ENCODE measurements at regions of chr16 and their contacts with region 1.

Region 1: DNA sequence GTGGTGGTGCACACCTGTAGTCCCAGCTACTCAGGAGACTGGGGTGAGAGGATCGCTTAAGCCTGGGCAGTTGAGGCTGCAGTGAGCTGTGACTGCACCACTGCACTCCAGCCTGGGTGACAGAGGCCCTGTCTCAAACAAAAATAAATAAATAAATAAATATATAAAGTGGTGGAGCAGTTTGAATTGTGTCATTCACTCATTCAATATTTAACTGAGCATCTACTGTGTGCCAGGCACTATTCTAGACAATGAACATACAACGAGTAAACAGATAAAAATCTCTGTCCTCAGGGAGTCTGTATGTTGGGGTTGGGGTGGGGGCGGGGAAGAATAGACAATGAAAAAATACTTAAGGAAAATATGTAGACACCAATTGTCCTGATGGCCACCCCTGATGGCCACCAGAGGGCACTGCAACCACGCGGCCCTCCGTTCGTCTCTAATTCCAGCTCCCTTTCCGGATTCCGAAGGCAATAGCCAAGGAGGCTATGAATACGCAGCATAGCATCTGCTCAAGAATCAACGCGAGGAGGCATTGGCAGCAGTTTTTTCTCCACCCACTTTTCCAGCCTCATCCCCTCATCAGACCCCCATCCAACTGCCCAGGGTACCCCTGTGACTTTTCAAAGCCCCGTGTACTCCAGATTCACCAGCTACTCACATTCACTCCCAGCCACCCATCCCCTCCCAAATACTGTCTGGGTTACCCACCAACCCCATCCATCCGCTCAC is 21.4 kb downstream of the QPRT start:
- DNase-seq: peak; percentile 78
- H3K4me3 Mint-ChIP-seq: peak overlapping the region; percentile 49
- H3K27ac Mint-ChIP-seq: peak overlapping the region; percentile 91
- H3K4me1 Mint-ChIP-seq: peaks cover 40% of the 10 kb centered on the region
- H3K27me3 Mint-ChIP-seq: peaks cover 3% of the 10 kb centered on the region

Region 2: GRCh38 chr16:29720699-29721098 is 20.3 kb after region 1 on chr16:
- CTCF ChIA-PET with region 1: interaction called, 10 read pairs
- POLR2A ChIA-PET with region 1: interaction called, 3 read pairs
- DNase-seq: no peak
- H3K4me3 Mint-ChIP-seq: no peak overlapping the region
- H3K27ac Mint-ChIP-seq: peak overlapping the region; percentile 64
- H3K4me1 Mint-ChIP-seq: peaks cover 19% of the 10 kb centered on the region
- H3K27me3 Mint-ChIP-seq: no peaks in the 10 kb centered on the region

Region 3: GRCh38 chr16:29784901-29785500 is 84.6 kb after region 1 on chr16:
- CTCF ChIA-PET with region 1: interaction called, 28 read pairs
- POLR2A ChIA-PET with region 1: interaction called, 3 read pairs
- DNase-seq: peak; percentile 71
- H3K4me3 Mint-ChIP-seq: no peak overlapping the region
- H3K27ac Mint-ChIP-seq: peak overlapping the region; percentile 80
- H3K4me1 Mint-ChIP-seq: peaks cover 33% of the 10 kb centered on the region
- H3K27me3 Mint-ChIP-seq: peaks cover 5% of the 10 kb centered on the region

Region 4: DNA sequence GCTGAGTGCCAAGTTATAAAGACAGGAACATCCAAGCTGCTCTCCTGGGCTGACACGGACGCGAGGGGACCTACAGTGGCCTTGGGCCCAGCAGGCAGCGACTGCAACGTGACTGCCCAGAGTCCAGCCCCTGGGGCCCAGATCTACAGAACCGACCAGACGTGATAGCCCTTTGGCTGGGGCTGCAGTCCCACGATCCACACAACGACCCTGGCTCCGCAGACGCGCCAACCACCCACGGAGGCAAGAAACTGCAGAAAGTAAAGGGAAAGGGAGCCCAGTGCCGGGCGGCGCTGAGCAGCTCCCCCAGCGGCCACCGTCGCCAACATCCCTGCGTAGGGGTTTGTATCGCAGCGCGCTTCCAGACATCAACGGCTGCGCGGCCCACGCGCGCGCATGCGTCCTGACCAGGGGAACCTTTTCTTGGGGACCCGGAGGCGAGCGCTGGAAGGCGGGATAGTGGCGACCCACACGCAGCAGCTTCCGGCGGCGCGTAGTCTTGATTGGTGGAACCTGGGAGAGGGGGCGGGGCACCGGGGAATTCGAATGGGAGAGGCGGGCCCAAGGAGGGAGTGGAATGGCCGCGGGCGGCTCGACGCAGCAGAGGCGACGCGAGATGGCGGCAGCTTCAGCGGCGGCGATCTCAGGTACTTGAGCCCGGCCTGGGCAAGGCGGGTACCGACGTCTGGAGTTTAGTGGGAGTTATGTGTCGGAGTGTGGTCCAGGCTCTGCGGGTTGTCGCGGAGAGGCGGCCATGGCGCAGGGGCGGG is 89.9 kb after region 1 on chr16 and contains the start of gene KIF22:
- CTCF ChIA-PET with region 1: interaction called, 28 read pairs
- POLR2A ChIA-PET with region 1: interaction called, 3 read pairs
- DNase-seq: peak; percentile 100
- H3K4me3 Mint-ChIP-seq: peak within 1 kb of the TSS; percentile 99
- H3K27ac Mint-ChIP-seq: peak within 1 kb of the TSS; percentile 98
- H3K4me1 Mint-ChIP-seq: peaks cover 50% of the 10 kb centered on the region
- H3K27me3 Mint-ChIP-seq: no peaks in the 10 kb centered on the region
- total RNA-seq, gene KIF22: 244 to 253 TPM

Region 5: GRCh38 chr16:29805378-29806098 is 105.1 kb after region 1 on chr16:
- CTCF ChIA-PET with region 1: interaction called, 13 read pairs
- POLR2A ChIA-PET with region 1: interaction called, 3 read pairs
- DNase-seq: peak; percentile 98
- H3K4me3 Mint-ChIP-seq: peak overlapping the region; percentile 89
- H3K27ac Mint-ChIP-seq: peak overlapping the region; percentile 99
- H3K4me1 Mint-ChIP-seq: peaks cover 47% of the 10 kb centered on the region
- H3K27me3 Mint-ChIP-seq: no peaks in the 10 kb centered on the region

Region 6: GRCh38 chr16:29815793-29816693 is 115.6 kb after region 1 on chr16 and contains the start of gene PAGR1:
- CTCF ChIA-PET with region 1: interaction called, 17 read pairs
- POLR2A ChIA-PET with region 1: interaction called, 4 read pairs
- DNase-seq: peak; percentile 99
- H3K4me3 Mint-ChIP-seq: peak within 1 kb of the TSS; percentile 91
- H3K27ac Mint-ChIP-seq: peak within 1 kb of the TSS; percentile 96
- H3K4me1 Mint-ChIP-seq: peaks cover 71% of the 10 kb centered on the region
- H3K27me3 Mint-ChIP-seq: peaks cover 13% of the 10 kb centered on the region
- total RNA-seq, gene PAGR1: 26.8 to 29.6 TPM

Region 7: GRCh38 chr16:29848420-29849297 is 148.2 kb after region 1 on chr16:
- CTCF ChIA-PET with region 1: interaction called, 37 read pairs
- POLR2A ChIA-PET with region 1: no interaction called
- DNase-seq: peak; percentile 87
- H3K4me3 Mint-ChIP-seq: no peak overlapping the region
- H3K27ac Mint-ChIP-seq: peak overlapping the region; percentile 19
- H3K4me1 Mint-ChIP-seq: peaks cover 10% of the 10 kb centered on the region
- H3K27me3 Mint-ChIP-seq: no peaks in the 10 kb centered on the region